Activated T-helper 2 cell treated with anti-CD3 and anti-CD28 coated beads, Interferon-gamma antibody, Interleukin-2, Interleukin-4, amounts not matched to agents 10 μg/mL and 5 μg/mL and 100 μg/mL, durations not matched to agents 14 hours and 24 hours and 36 hours (primary cell): ENCODE measurements at regions of chr3 and their contacts with region 1.

Region 1: GRCh38 chr3:114213627-114214541 is 23.5 kb downstream of the ZNF80 start:
- DNase-seq: peak; percentile 74
- H3K4me3 Mint-ChIP-seq: no peak overlapping the region
- H3K27ac Mint-ChIP-seq: no peak overlapping the region
- H3K4me1 Mint-ChIP-seq: peaks cover 7% of the 10 kb centered on the region
- H3K27me3 Mint-ChIP-seq: no peaks in the 10 kb centered on the region

Region 2: GRCh38 chr3:113696658-113697499 is 517.0 kb before region 1 on chr3:
- intact Hi-C with region 1: loop called (anchors 5 kb)
- DNase-seq: peak; percentile 99
- H3K4me3 Mint-ChIP-seq: no peak overlapping the region
- H3K27ac Mint-ChIP-seq: no peak overlapping the region
- H3K4me1 Mint-ChIP-seq: peaks cover 20% of the 10 kb centered on the region
- H3K27me3 Mint-ChIP-seq: no peaks in the 10 kb centered on the region

Region 3: DNA sequence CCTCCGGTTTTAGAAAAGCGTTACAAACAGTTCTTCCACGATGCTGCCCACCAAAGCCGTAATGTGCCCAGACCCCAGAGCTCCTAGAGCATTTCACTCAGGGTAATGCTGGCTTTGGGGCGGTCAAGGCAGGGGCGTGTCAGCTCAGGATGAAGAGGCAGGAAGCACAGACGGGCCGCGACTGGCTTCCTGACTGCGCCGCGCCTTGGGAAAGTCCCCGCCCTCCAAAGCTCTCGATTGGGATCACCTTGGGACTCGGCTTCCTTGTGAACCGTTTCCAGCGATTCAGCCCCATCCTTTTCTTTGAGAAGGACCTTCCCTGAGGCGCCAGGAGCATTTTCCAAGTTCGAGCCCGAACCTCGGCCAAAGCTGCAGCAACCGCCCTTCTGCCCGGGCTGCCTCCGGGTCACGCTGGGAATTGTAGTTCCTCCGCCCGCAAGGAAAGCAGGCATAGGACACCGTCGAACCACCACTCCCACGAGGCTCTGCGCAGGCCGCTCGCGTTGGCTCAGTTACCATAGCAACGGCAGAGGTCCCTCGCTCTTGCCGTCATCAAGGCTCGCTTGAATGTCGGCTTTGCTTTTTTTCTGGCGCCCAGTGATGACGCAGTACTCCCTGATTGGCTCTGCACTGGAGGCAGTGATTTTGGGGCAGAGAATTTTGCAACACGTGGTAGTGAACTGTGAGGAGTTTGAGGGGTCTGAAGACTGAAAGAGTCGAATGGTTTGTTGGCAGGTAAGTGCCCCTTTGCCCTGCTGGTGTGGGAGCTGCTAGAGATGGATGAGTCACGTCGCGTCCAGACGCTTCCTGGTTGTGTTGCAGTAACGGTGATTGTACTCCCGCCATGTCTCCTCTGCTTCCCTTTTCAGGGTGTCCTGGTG is 157.5 kb before region 1 on chr3 and contains the starts of genes CCDC191 and QTRT2:
- intact Hi-C with region 1: loop called (anchors 1 kb)
- DNase-seq: peak; percentile 98
- H3K4me3 Mint-ChIP-seq: peak within 1 kb of the TSS; percentile 91
- H3K27ac Mint-ChIP-seq: peak within 1 kb of the TSS; percentile 89
- H3K4me1 Mint-ChIP-seq: peaks cover 22% of the 10 kb centered on the region
- H3K27me3 Mint-ChIP-seq: no peaks in the 10 kb centered on the region
- total RNA-seq, gene CCDC191: 0.68 and 0.76 TPM in 2 replicates
- total RNA-seq, gene QTRT2: 40.2 and 41.3 TPM in 2 replicates

Region 4: DNA sequence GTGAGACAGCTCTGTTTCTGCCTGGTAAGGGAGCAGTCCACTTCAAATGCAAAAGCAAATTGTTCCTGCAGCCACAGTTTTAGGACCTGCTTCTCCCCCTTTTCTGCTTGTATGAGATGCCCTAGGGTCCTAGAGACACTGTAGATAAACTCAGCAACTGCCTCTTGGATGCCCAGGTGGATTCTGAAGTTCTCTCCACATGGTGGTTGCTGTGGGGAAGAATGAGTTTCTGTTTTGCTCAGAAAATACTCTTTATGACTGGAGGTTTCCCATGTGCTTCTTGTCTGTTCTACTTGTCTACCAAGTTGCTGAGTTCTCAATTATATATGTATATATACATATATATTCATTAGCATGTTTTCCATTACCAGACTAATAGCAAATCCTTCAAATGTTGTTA is 29.1 kb after region 1 on chr3:
- intact Hi-C with region 1: loop called (anchors 1 kb)
- DNase-seq: no peak
- H3K4me3 Mint-ChIP-seq: no peak overlapping the region
- H3K27ac Mint-ChIP-seq: peak overlapping the region; percentile 29
- H3K4me1 Mint-ChIP-seq: peaks cover 31% of the 10 kb centered on the region
- H3K27me3 Mint-ChIP-seq: no peaks in the 10 kb centered on the region

Region 5: GRCh38 chr3:114332342-114333179 is 118.7 kb after region 1 on chr3:
- intact Hi-C with region 1: loop called (anchors 1 kb)
- DNase-seq: no peak
- H3K4me3 Mint-ChIP-seq: no peak overlapping the region
- H3K27ac Mint-ChIP-seq: peak overlapping the region; percentile 80
- H3K4me1 Mint-ChIP-seq: peaks cover 64% of the 10 kb centered on the region
- H3K27me3 Mint-ChIP-seq: no peaks in the 10 kb centered on the region

Region 6: GRCh38 chr3:114370537-114371174 is 156.8 kb after region 1 on chr3:
- intact Hi-C with region 1: no loop called
- DNase-seq: no peak
- H3K4me3 Mint-ChIP-seq: no peak overlapping the region
- H3K27ac Mint-ChIP-seq: no peak overlapping the region
- H3K4me1 Mint-ChIP-seq: no peaks in the 10 kb centered on the region
- H3K27me3 Mint-ChIP-seq: no peaks in the 10 kb centered on the region

Region 7: DNA sequence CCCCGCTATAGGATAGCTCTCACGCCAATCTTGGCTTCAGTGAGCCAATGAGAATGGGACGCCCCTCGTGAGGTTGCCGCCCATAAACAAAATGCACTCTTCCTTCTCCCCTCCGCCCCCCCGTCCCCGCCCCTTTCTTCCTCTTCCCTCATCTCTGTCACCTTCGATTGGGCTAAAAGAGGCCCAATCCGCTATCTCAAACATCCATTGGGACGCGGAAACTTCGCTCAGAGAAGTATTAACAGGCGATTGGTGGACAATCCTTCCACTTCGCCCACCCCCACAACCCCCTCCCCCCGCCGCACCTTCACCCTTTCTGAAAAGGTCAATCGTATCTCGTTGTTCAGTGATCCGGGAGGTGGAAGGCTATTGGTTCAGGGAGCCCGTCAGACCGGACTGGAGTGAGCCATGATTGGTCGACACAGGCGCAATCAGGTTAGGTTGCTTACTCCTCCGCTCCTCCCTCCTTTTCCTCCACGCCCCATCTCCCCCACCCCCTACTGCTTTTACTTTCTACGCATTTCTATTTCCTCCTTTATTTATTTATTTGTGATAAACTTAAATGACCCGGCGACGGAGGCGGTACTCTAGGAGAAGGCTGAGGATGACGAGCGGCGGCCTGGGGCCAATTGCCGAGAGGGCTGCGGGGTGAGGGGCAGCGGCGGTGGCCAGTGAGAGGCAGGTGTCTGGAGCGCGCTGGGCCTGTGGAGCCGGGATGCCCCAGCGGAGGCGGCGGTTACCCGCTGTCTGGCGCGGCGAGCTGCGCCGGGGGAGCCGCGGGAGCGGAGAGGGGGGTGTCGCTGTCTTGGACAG is 933.7 kb after region 1 on chr3:
- intact Hi-C with region 1: loop called (anchors 1 kb)
- DNase-seq: peak; percentile 96
- H3K4me3 Mint-ChIP-seq: peak overlapping the region; percentile 97
- H3K27ac Mint-ChIP-seq: peak overlapping the region; percentile 99
- H3K4me1 Mint-ChIP-seq: peaks cover 17% of the 10 kb centered on the region
- H3K27me3 Mint-ChIP-seq: peaks cover 9% of the 10 kb centered on the region